Right lobe of liver (tissue), 6 donors: ENCODE measurements at regions of chr17 and their contacts with region 1.

Region 1: DNA sequence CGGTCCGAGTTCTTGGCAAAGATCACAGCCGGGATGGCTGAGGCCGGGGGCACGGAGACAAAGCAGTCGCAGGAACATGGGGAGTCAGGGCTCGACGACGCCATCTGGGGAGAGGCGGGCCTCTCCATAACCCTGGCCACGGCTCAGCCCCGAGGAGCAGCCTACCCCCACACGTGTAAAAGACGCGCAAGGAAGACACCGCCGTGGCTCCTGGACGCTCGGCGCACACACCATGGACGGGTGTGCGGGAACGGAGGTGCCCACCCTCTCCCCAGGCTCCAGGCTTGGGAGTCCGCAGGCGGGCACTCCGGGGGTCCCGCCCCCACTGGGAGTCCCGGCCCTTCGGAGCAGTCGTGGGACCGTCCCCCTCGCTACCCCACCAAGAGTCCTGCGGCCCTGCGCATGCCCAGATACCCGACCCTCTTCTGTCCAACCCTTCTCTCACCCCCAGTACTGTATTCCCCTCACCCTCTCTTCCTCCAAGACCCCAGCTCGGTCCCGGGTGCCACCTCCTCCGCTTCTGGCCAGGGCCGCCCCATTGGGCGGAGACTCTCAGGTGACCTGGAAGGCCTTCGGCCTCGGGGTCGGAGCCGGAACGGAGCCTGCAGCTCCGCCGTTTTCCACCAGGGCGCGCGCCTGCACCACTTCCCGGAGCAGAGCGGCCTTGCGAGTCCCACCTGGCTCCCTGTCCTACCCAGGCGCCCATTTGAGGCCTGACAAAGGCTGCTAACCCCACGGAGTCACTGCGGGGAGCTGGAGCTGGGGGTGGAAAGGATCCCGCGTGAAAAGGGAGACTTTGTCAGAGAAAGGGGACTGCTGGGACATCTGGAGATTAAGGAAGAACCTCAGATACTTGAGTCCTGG is at the start of gene SCRN2:
- DNase-seq: peak; percentile 91 to 94 (median 93)
- ATAC-seq: peak; percentile 93 to 97 (median 95)
- H3K4me3 ChIP-seq: peak within 1 kb of the TSS; percentile 86 to 94 (median 92)
- H3K27ac ChIP-seq: peak within 1 kb of the TSS; percentile 52 to 92 (median 75)
- H3K4me1 ChIP-seq: peaks cover 0 to 31% (median 11%) of the 10 kb centered on the region in 4 donors
- H3K27me3 ChIP-seq: no peaks in the 10 kb centered on the region
- CTCF ChIP-seq: peak; percentile 92 to 97 (median 94)
- POLR2A ChIP-seq: no peak
- total RNA-seq, gene SCRN2: 18.1 to 25.7 (median 19.6) TPM

Region 2: GRCh38 chr17:47889734-47890529 is 49.0 kb after region 1 on chr17:
- intact Hi-C with region 1: loop called (anchors 5 kb)
- DNase-seq: peak; percentile 89 to 90 (median 89)
- ATAC-seq: peak; percentile 95 to 99 (median 96)
- H3K4me3 ChIP-seq: no peak overlapping the region
- H3K27ac ChIP-seq: no peak overlapping the region
- H3K4me1 ChIP-seq: peaks cover 0 to 8% (median 0%) of the 10 kb centered on the region in 4 donors
- H3K27me3 ChIP-seq: no peaks in the 10 kb centered on the region
- CTCF ChIP-seq: peak; percentile 95 to 98 (median 96)
- POLR2A ChIP-seq: no peak

Region 3: GRCh38 chr17:48011405-48012150 is 170.6 kb after region 1 on chr17:
- intact Hi-C with region 1: loop called (anchors 10 kb)
- DNase-seq: peak in 1 of 3 donors; percentile 35
- ATAC-seq: peak; percentile 62 to 67 (median 62)
- H3K4me3 ChIP-seq: peak overlapping the region in 1 of 3 donors; percentile 13
- H3K27ac ChIP-seq: no peak overlapping the region
- H3K4me1 ChIP-seq: peaks cover 0 to 11% (median 0%) of the 10 kb centered on the region in 4 donors
- H3K27me3 ChIP-seq: peaks cover 0 to 10% of the 10 kb centered on the region in 2 donors
- CTCF ChIP-seq: peak; percentile 11 to 40 (median 35)
- POLR2A ChIP-seq: no peak